Right ventricle myocardium inferior (tissue), 1 donor: ENCODE measurements at regions of chr3 and their contacts with region 1.

Region 1: GRCh38 chr3:143121241-143122088 is 1.9 kb downstream of the CHST2 start:
- DNase-seq: no peak
- ATAC-seq: peak; percentile 21

Region 2: GRCh38 chr3:143171141-143171970 is 49.9 kb after region 1 on chr3:
- intact Hi-C with region 1: loop called (anchors 10 kb)
- DNase-seq: no peak
- ATAC-seq: peak; percentile 56

Region 3: DNA sequence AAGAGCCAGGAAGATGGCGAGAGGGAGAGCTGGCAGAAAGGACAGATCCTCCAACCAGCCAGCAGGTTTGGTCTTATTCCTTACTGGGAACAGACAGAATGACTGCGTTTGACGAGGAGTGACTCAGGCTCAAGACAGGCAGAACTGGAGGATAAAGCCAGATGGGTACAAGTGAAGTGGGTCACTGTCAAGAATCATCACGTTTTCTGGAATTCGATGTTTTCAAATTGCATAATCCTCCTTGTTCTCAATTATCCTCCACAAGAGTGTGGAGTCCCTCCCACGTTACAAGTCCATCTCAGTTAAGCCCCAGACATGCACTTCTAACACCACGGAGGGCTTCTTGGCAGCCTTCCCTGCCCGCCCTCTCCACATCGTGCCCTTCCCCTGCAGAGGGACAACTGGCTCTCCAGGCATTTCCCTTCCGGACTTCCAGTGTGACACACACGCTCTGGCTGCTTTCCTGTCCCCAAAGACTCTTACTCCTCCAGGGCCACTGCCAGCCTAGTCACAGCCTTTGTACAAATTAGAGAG is 181.2 kb after region 1 on chr3:
- intact Hi-C with region 1: loop called (anchors 10 kb)
- DNase-seq: peak; percentile 68
- ATAC-seq: peak; percentile 55

Region 4: DNA sequence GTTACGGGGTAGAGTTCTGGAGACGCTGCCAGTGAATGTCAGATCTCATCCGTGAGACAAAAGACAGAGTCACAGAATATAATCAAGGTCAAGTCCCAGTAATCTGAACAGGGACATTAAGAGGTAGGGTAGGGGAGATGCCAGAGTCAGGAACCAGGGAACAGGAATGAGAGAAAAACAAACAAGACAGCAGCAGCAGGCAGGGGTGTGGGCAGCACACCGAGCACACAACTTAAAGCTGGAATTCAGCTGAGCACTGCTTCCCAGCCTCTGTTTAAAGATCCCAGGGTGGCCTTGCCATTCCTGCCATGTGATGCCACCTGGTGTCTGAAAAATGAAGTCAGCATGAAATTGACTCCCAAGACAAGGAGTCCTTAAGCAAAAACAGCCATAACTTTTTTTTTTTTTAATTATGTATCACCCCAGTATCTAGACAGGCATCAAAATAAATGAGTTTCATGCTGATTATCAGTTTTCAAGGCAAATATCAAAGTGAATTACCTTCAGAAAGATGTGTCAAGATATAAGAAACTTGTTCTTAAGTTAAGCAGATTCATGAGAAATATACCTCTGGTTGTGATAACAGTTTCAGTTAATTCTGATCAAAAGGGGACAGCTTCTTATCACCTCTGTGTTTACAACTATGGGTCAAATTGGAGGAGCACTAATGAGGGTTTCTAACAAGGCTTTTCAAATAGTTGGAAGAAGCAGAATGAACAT is 523.1 kb after region 1 on chr3:
- intact Hi-C with region 1: loop called (anchors 10 kb)
- DNase-seq: no peak
- ATAC-seq: no peak